Activated naive CD8-positive, alpha-beta T cell treated with anti-CD3 and anti-CD28 coated beads, Interleukin-2, amount 10 ng/mL, durations not matched to agents 7 days and 5 days (primary cell): ENCODE measurements at regions of chr13 and their contacts with region 1.

Region 1: DNA sequence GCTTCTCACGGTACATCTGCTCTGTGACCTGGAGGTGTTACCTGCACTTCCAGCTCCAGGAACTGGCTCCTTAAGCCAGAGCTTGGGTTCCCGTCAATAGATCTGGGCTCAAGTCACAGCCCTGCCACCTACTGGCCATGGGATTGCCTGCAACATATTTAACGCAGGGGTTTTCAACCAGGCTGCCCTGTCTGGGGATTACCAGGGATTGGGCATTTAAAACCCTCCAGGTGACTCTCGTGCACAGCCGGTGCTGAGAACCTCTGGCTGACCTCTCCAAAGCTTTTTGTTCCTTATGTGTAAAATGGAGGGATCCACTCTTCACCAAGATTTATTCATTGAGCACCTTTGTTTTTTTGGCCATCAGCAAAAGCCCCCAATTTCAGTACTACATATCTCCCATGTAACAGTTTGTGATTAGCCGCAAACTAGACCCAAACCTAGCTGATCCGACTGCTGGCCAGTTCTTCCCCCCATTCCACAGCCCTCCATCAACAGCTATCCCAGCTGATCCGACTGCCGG is 76.6 kb upstream of the STK24 start:
- DNase-seq: peak; percentile 67
- ATAC-seq: peak; percentile 90
- H3K4me3 Mint-ChIP-seq: peak overlapping the region; percentile 24
- H3K27ac Mint-ChIP-seq: no peak overlapping the region
- H3K4me1 Mint-ChIP-seq: peaks cover 2% of the 10 kb centered on the region
- H3K27me3 Mint-ChIP-seq: peaks cover 10% of the 10 kb centered on the region

Region 2: GRCh38 chr13:98445340-98446233 is 207.9 kb before region 1 on chr13:
- POLR2A ChIA-PET with region 1: interaction called, 10 read pairs
- DNase-seq: peak; percentile 85
- ATAC-seq: peak; percentile 94
- H3K4me3 Mint-ChIP-seq: peak overlapping the region; percentile 32
- H3K27ac Mint-ChIP-seq: peak overlapping the region; percentile 86
- H3K4me1 Mint-ChIP-seq: peaks cover 7% of the 10 kb centered on the region
- H3K27me3 Mint-ChIP-seq: no peaks in the 10 kb centered on the region

Region 3: DNA sequence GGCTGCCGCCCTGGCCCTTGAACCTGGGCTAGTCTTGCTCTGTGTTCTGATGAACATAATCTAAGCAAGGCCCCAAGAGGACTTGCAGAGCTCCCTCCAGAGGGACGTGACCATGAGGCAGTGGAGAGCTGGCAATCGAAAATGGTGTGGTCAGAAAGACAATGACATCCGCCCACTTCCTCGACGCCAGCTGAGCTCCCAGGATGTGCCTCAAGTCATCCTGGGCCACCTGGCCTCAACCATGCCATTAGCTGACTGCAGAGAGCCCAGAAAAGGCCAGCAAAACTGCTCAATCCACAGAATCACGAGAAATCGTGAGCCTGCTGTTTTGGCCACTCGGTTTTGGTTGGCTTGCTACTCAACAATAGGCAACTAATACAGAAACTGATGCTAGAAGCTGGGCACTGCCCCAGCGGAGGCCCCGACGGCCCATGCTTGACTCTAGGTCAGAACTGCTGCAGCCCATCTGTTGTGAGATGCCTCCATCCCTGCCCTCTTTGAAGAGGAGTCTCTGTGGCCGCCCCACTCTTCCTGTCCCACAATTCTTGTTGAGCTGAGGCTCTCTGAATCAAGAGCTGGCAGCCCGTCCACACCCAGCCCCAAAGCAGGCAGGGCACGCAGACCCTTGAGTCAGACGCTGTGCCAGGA is 129.9 kb before region 1 on chr13:
- POLR2A ChIA-PET with region 1: no interaction called
- DNase-seq: no peak
- ATAC-seq: no peak
- H3K4me3 Mint-ChIP-seq: no peak overlapping the region
- H3K27ac Mint-ChIP-seq: peak overlapping the region; percentile 58
- H3K4me1 Mint-ChIP-seq: peaks cover 44% of the 10 kb centered on the region
- H3K27me3 Mint-ChIP-seq: no peaks in the 10 kb centered on the region

Region 4: DNA sequence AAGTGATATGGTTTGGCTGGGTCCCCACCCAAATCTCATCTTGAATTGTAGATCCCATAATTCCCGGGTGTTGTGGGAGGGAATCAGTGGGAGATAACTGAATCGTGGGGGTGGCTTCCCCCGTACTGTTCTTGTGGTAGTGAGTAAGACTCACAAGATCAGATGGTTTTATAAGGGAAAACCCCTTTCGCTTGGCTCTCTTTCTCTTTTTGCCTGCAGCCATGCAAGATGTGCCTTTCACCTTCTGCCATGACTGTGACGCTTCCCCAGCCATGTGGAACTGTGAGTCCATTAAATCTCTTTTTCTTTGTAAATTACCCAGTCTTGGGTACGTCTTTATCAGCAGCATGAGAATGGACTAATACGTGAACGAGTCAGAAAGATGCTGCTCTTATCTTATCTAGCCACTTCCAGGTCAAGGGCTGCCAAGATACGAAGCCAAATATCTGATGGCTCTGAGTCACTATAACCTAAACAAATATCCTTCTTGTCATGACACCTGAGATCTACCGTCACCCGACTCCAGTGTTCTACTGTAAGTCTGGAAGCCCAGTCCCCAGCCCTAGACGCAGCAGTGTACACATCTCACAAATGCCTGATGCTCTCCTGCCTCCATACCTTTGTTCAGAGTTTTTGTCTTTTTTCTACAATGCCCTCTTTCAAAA is 53.1 kb after region 1 on chr13:
- POLR2A ChIA-PET with region 1: no interaction called
- DNase-seq: no peak
- ATAC-seq: no peak
- H3K4me3 Mint-ChIP-seq: no peak overlapping the region
- H3K27ac Mint-ChIP-seq: no peak overlapping the region
- H3K4me1 Mint-ChIP-seq: no peaks in the 10 kb centered on the region
- H3K27me3 Mint-ChIP-seq: peaks cover 18% of the 10 kb centered on the region